ENCODE measurements at regions of chr4 and their contacts with region 1.

Region 1: DNA sequence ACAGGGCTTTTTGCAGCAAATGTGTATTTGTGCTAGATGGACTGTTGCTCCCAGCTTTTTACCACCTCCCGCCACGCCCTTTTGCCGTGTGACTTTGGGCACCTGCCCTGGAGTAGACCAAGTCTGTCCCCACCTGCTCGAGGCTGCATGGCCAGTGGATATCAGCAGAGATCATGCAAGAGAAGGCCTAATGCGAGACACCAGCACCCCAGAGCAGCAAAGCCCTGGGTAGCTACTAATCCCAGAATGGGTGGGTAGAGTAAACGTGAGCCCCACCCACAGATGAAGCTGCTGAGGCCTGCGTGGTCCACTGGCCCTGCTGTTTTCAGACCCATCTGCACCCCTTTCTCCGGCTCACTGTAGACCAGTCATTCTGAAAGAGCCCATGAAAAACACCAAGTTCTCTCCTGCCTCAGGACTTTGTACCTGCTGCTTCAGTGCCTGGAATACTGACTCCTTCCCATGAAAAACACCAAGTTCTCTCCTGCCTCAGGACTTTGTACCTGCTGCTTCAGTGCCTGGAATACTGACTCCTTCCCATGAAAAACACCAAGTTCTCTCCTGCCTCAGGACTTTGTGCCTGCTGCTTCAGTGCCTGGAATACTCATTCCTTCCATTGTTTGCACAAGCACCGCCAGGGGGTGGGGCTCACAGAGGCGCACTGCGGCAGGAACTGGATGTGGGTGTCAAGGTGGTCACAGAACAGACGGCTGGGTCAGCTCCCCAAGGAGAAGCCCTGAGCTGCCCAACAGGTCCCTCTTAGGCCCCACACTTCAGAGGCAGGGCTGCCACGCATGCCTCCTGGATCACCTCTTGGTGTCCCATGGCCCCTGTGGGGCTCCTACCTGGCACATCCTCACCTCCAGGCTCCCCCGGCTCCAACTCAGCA is 5.1 kb upstream of the TNIP2 start:
- DNase-seq: peak in 1 of 2 donors; percentile 85
- H3K4me3 ChIP-seq: no peak overlapping the region
- H3K27ac ChIP-seq: no peak overlapping the region
- H3K4me1 ChIP-seq: peaks cover 5% of the 10 kb centered on the region
- H3K27me3 ChIP-seq: no peaks in the 10 kb centered on the region
- CTCF ChIP-seq: no peak
- POLR2A ChIP-seq: no peak

Region 2: DNA sequence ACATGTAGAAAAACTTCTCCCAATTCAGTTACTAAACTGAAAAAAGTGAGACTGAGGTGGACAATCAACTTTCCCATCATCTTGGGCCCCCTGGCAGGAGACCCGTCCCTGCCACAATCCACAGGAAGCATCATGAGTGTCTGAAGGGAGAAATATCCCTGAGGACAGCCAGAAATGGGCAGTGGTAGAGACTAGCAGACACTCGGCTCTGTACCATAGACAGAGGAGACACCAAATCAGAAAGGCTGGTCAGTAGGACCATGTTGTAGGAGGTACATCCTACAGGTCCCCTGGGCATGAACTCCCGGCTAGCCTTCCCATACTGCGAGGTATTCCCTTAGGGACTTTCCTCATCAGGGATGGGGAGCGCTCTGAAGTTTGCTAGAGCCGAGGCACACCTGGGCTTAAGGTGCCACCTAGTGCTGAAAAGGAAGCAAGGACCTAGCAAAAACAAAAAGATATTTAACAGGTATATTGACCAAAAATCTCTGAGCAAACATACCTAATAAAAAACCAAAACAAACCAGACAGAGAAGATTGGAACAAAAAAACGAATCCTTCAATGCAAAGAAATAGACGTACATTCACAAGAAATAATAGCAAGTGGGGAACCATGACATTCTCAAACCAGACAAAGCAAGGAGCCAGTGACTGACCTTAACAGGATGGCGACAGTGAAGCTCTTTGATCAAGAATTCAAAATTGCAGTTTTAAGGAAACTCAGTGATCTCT is 575.0 kb before region 1 on chr4:
- intact Hi-C with region 1: no loop called
- DNase-seq: no peak
- H3K4me3 ChIP-seq: no peak overlapping the region
- H3K27ac ChIP-seq: no peak overlapping the region
- H3K4me1 ChIP-seq: no peaks in the 10 kb centered on the region
- H3K27me3 ChIP-seq: no peaks in the 10 kb centered on the region
- CTCF ChIP-seq: no peak
- POLR2A ChIP-seq: no peak

Region 3: DNA sequence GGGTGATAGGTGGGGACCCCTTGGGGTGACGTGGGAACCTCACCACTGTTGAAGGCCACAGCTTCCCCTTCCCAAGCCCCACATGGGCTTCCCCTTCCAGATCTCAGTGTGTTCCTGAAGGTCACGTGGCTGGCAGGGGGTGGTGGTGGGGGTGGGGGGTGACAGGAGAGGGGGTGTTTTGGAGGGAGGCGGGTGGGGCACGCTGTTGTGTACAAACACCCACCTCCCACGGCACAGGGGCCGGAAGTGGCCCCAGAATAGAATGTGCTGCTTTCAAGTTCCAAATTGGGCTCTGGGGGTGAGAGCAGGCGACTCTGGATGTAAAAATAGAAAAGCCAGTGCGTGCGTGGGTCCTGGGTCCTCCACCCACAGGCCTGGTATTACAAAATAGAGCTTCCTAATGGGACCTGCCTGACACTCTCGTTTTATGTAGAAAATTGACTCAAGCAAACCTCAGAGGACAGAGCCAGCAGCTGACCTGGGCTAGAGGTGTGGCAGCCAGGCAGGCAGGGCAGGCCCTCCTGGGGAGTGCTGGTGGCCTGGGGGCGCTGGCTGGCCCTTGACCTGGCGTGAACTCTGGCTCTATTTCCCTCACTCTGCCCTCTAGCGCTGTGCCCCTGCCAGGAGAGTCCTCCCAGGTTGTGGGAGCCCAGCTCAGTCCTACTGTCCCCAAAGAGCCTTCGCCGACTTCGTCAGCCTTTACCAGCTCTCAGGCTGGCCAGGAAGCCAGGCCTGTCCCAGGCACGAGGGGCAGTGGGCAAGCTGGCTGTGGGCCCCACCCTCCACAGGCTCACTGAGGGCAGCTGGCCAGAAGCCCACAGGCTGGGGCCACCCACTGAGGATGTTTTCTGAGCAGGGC is 26.2 kb after region 1 on chr4:
- intact Hi-C with region 1: no loop called
- DNase-seq: no peak
- H3K4me3 ChIP-seq: no peak overlapping the region
- H3K27ac ChIP-seq: peak overlapping the region; percentile 56
- H3K4me1 ChIP-seq: peaks cover 27% of the 10 kb centered on the region
- H3K27me3 ChIP-seq: no peaks in the 10 kb centered on the region
- CTCF ChIP-seq: no peak
- POLR2A ChIP-seq: no peak

Region 4: GRCh38 chr4:2843263-2843940 is 82.1 kb after region 1 on chr4 and contains the start of gene ADD1:
- intact Hi-C with region 1: loop called (anchors 10 kb)
- DNase-seq: no peak
- H3K4me3 ChIP-seq: peak within 1 kb of the TSS; percentile 74 to 95
- H3K27ac ChIP-seq: peak within 1 kb of the TSS; percentile 96
- H3K4me1 ChIP-seq: peaks cover 51% of the 10 kb centered on the region
- H3K27me3 ChIP-seq: no peaks in the 10 kb centered on the region
- CTCF ChIP-seq: no peak
- POLR2A ChIP-seq: peak in 1 of 2 donors; percentile 69
- total RNA-seq, gene ADD1: 228 TPM

Region 5: DNA sequence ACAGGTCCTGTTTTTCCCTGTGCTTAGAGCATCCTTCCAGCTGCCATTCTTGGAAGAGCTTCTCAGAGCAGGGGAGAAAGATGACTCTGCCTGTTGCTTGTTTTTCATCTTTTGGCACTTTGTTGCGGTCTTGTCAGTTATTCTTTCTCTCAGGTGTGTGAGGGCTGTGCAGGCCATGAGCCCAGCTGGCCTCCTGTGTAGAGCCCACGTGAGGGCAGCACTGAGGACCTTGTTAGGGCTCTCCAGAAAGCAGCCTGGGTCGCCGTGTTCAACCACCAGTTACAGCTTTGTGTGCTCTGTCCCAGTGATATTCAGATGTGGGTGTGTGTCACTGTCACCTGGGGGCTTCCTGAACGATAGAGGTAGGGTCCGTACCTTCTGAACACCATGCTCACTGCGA is 149.1 kb after region 1 on chr4:
- intact Hi-C with region 1: no loop called
- DNase-seq: no peak
- H3K4me3 ChIP-seq: no peak overlapping the region
- H3K27ac ChIP-seq: no peak overlapping the region
- H3K4me1 ChIP-seq: no peaks in the 10 kb centered on the region
- H3K27me3 ChIP-seq: no peaks in the 10 kb centered on the region
- CTCF ChIP-seq: no peak
- POLR2A ChIP-seq: no peak